CD8-positive, alpha-beta T cell (primary cell): ENCODE measurements at regions of chr18 and their contacts with region 1.

Region 1: GRCh38 chr18:35085450-35086380 is 44.5 kb downstream of the MAPRE2 start:
- DNase-seq: no peak
- ATAC-seq: no peak
- H3K4me3 ChIP-seq: no peak overlapping the region
- H3K4me3 Mint-ChIP-seq: no peak overlapping the region
- H3K27ac ChIP-seq: no peak overlapping the region
- H3K27ac Mint-ChIP-seq: no peak overlapping the region
- H3K4me1 ChIP-seq: no peaks in the 10 kb centered on the region
- H3K4me1 Mint-ChIP-seq: peaks cover 59% of the 10 kb centered on the region
- H3K27me3 ChIP-seq: no peaks in the 10 kb centered on the region
- H3K27me3 Mint-ChIP-seq: no peaks in the 10 kb centered on the region
- CTCF ChIP-seq: no peak

Region 2: GRCh38 chr18:35099911-35100310 is 14.2 kb after region 1 on chr18:
- CTCF ChIA-PET with region 1: no interaction called
- POLR2A ChIA-PET with region 1: no interaction called
- intact Hi-C with region 1: loop called in 1 of 2 experiments (anchors 2 kb)
- DNase-seq: no peak
- ATAC-seq: no peak
- H3K4me3 ChIP-seq: no peak overlapping the region
- H3K4me3 Mint-ChIP-seq: no peak overlapping the region
- H3K27ac ChIP-seq: no peak overlapping the region
- H3K27ac Mint-ChIP-seq: no peak overlapping the region
- H3K4me1 ChIP-seq: peaks cover 2% of the 10 kb centered on the region
- H3K4me1 Mint-ChIP-seq: peaks cover 27% of the 10 kb centered on the region
- H3K27me3 ChIP-seq: no peaks in the 10 kb centered on the region
- H3K27me3 Mint-ChIP-seq: no peaks in the 10 kb centered on the region
- CTCF ChIP-seq: no peak

Region 3: DNA sequence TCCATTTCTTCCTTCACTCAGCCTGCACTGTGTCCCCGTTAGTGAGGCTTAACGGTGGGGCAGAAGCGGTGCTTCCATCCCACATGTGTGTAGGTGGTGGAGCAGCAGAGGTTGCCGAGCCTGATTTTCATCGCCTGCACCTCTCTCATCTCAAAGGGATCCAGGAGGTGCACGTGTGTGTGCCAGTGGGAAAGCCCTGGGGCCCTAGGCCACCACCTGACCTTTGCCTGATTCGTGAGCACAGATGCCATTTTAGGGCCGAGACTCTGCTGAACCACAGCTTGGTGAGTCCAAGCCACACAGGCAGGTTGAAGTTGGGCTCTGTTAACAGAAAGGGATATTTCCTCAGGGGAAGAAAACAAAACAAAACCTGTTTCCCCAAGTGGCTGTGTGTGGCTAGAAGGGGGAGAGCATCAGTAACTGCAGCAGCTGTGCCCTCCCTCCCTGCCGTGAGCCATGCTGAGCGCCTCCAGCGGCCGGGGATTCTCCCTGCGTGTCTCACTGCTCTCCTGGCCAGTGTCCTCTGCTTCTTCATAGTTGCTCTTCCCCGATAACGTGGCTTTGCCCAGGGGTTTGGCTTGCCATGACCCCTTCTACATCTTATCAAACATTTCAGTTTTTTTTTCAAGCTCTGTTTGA is 37.0 kb after region 1 on chr18:
- CTCF ChIA-PET with region 1: no interaction called
- POLR2A ChIA-PET with region 1: no interaction called
- intact Hi-C with region 1: loop called in 1 of 2 experiments (anchors 5 kb)
- DNase-seq: peak in 4 of 9 experiments; percentile 21 to 57 (median 38)
- ATAC-seq: peak; percentile 78
- H3K4me3 ChIP-seq: no peak overlapping the region
- H3K4me3 Mint-ChIP-seq: peak overlapping the region; percentile 60
- H3K27ac ChIP-seq: no peak overlapping the region
- H3K27ac Mint-ChIP-seq: peak overlapping the region; percentile 84
- H3K4me1 ChIP-seq: peaks cover 33% of the 10 kb centered on the region
- H3K4me1 Mint-ChIP-seq: peaks cover 62% of the 10 kb centered on the region
- H3K27me3 ChIP-seq: no peaks in the 10 kb centered on the region
- H3K27me3 Mint-ChIP-seq: no peaks in the 10 kb centered on the region
- CTCF ChIP-seq: peak; percentile 29

Region 4: GRCh38 chr18:35549564-35549963 is 463.8 kb after region 1 on chr18:
- CTCF ChIA-PET with region 1: no interaction called
- POLR2A ChIA-PET with region 1: no interaction called
- intact Hi-C with region 1: no loop called
- DNase-seq: no peak
- ATAC-seq: no peak
- H3K4me3 ChIP-seq: no peak overlapping the region
- H3K4me3 Mint-ChIP-seq: no peak overlapping the region
- H3K27ac ChIP-seq: no peak overlapping the region
- H3K27ac Mint-ChIP-seq: no peak overlapping the region
- H3K4me1 ChIP-seq: no peaks in the 10 kb centered on the region
- H3K4me1 Mint-ChIP-seq: no peaks in the 10 kb centered on the region
- H3K27me3 ChIP-seq: no peaks in the 10 kb centered on the region
- H3K27me3 Mint-ChIP-seq: no peaks in the 10 kb centered on the region
- CTCF ChIP-seq: no peak